Ascending aorta (tissue), 2 donors: ENCODE measurements at regions of chr10 and their contacts with region 1.

Region 1: GRCh38 chr10:12264204-12264940 is 68.4 kb downstream of the CDC123 start:
- DNase-seq: peak in 1 of 2 donors; percentile 85
- H3K4me3 ChIP-seq: peak overlapping the region; percentile 12 to 56
- H3K27ac ChIP-seq: peak overlapping the region in 1 of 2 donors; percentile 54
- H3K4me1 ChIP-seq: no peaks in the 10 kb centered on the region
- H3K27me3 ChIP-seq: no peaks in the 10 kb centered on the region
- CTCF ChIP-seq: peak; percentile 86 to 96 (median 92)

Region 2: DNA sequence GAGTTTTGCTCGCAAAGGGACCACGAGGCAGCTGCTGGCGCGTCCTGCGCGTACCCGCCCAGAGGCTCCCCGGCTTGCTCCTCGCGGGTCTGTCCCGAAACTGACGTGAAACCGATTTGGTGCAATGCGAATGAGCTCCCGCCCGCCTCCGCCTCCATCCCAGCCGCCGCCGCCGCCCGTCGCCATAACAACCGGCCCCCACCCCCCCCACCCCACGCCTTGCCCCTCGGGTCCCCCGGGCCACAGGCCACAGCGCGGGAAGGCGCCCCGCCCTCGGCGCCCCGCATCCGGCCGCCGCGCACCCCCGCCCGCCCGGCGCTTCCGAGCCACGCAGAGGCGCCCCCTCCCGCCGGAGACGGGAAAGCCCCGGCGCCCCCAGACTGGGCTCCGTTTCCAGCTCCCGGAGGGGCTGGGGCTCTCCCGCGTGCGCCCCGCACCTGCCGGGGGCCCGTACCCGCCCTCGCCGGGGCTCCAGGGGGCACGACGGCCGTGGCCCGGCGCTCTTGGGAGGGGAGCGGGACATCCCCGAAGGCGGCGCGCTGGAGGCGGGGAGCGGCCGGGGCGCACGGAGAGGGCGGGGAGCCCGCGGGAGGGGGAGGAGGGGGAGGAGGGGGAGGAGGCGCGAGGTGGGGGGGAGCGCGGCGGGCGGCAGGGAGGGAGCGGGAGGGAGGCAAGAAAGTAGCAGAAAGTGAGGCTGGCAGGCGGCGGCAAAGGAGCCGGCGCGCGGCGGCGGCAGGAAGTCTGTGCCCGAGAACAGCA is 84.7 kb after region 1 on chr10 and contains the start of gene CAMK1D:
- intact Hi-C with region 1: loop called (anchors 5 kb)
- DNase-seq: peak; percentile 33 to 90
- H3K4me3 ChIP-seq: peak within 1 kb of the TSS; percentile 88 to 100
- H3K27ac ChIP-seq: peak within 1 kb of the TSS; percentile 94 to 95
- H3K4me1 ChIP-seq: peaks cover 0 to 12% of the 10 kb centered on the region in 2 donors
- H3K27me3 ChIP-seq: no peaks in the 10 kb centered on the region
- CTCF ChIP-seq: peak in 2 of 3 experiments; percentile 44 to 50
- total RNA-seq, gene CAMK1D: 4.2 TPM

Region 3: GRCh38 chr10:12500381-12501303 is 236.3 kb after region 1 on chr10:
- intact Hi-C with region 1: no loop called
- DNase-seq: peak in 1 of 2 donors; percentile 52
- H3K4me3 ChIP-seq: no peak overlapping the region
- H3K27ac ChIP-seq: no peak overlapping the region
- H3K4me1 ChIP-seq: peaks cover 5 to 9% of the 10 kb centered on the region in 2 donors
- H3K27me3 ChIP-seq: no peaks in the 10 kb centered on the region
- CTCF ChIP-seq: no peak

Region 4: GRCh38 chr10:12656518-12657142 is 392.3 kb after region 1 on chr10:
- intact Hi-C with region 1: loop called (anchors 1 kb)
- DNase-seq: no peak
- H3K4me3 ChIP-seq: no peak overlapping the region
- H3K27ac ChIP-seq: no peak overlapping the region
- H3K4me1 ChIP-seq: no peaks in the 10 kb centered on the region
- H3K27me3 ChIP-seq: no peaks in the 10 kb centered on the region
- CTCF ChIP-seq: peak; percentile 37 to 66 (median 63)

Region 5: DNA sequence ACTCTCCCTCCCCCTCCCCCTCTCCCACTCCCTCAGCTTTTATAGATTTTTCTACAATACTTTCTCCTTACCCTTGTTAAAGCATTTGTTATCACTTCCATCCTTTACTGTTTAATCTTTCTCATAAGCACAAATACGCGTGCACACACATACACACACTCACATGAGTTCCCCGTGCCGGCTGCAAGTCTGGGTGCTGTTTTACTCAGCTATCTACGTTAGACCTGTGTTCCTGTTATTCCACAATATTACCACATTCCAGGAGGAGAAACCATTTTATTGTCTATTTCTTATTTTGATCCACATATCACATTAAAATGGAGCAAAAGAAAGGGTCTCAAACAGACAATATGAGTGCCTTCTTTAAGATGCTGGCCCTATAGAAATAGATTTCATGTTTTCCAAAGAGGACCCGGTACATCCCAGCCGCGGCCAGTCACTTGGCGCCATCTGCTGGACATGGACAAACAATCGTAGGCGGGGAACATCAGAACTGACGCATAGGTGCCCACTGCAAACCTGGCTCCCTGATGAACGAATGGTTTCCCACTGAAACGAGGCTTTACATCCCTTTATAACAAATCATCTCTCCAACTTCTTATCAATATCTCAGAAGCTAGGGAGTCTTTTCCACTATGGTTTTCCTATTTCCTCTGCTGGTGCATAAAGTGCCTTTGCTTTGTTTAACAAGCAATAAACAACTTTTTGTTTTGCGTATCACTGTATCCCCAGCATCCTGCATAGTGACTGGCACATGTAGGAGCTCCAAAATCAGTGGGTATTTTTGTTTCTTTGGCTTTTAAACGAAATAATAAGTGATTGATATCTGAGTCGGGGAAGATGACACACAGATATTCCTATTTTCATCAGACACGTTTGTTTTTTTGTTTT is 810.4 kb after region 1 on chr10:
- intact Hi-C with region 1: loop called (anchors 2 kb)
- DNase-seq: peak in 1 of 2 donors; percentile 76
- H3K4me3 ChIP-seq: no peak overlapping the region
- H3K27ac ChIP-seq: no peak overlapping the region
- H3K4me1 ChIP-seq: no peaks in the 10 kb centered on the region
- H3K27me3 ChIP-seq: no peaks in the 10 kb centered on the region
- CTCF ChIP-seq: peak; percentile 62 to 87 (median 74)